ENCODE measurements at regions of chr6 and their contacts with region 1.

Region 1: GRCh38 chr6:52407467-52407866 is 12.7 kb upstream of the EFHC1 start:
- H3K4me3 ChIP-seq: no peak overlapping the region
- H3K27ac ChIP-seq: no peak overlapping the region
- H3K4me1 ChIP-seq: no peaks in the 10 kb centered on the region
- CTCF ChIP-seq: peak; percentile 64

Region 2: DNA sequence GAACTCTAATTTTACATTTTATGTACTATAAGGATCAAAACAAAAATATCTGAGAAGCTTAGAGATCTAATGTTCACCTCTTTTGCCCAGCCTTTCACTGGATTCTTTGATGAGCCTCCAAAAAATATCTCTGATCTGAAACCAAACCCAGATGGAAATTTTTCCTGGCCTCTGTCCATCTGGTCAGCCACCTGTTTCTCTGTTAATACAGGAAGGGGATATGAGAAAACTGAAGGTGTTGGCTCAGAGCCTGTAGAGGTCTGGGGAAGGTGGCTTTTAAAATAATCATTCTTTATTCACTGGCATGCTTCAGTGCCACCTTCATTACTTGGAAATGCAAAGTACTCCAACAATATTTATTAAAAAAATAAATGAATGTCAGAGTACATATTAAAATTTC is 114.4 kb before region 1 on chr6:
- CTCF ChIA-PET with region 1: interaction called, 202 read pairs
- POLR2A ChIA-PET with region 1: no interaction called
- H3K4me3 ChIP-seq: no peak overlapping the region
- H3K27ac ChIP-seq: no peak overlapping the region
- H3K4me1 ChIP-seq: no peaks in the 10 kb centered on the region
- CTCF ChIP-seq: no peak

Region 3: GRCh38 chr6:52497652-52498408 is 90.4 kb after region 1 on chr6:
- CTCF ChIA-PET with region 1: interaction called, 10 read pairs
- POLR2A ChIA-PET with region 1: no interaction called
- H3K4me3 ChIP-seq: no peak overlapping the region
- H3K27ac ChIP-seq: no peak overlapping the region
- H3K4me1 ChIP-seq: peaks cover 10% of the 10 kb centered on the region
- CTCF ChIP-seq: no peak